ENCODE measurements at regions of chr11 and their contacts with region 1.

Region 1: GRCh38 chr11:108647701-108648527 is 17.0 kb upstream of the DDX10 start:
- DNase-seq: peak; percentile 86
- H3K4me3 Mint-ChIP-seq: no peak overlapping the region
- H3K27ac Mint-ChIP-seq: no peak overlapping the region
- H3K4me1 Mint-ChIP-seq: no peaks in the 10 kb centered on the region
- H3K27me3 Mint-ChIP-seq: no peaks in the 10 kb centered on the region

Region 2: GRCh38 chr11:107999759-108000455 is 648.0 kb before region 1 on chr11:
- CTCF ChIA-PET with region 1: no interaction called
- intact Hi-C with region 1: loop called (anchors 1 kb)
- DNase-seq: peak; percentile 42
- H3K4me3 Mint-ChIP-seq: no peak overlapping the region
- H3K27ac Mint-ChIP-seq: no peak overlapping the region
- H3K4me1 Mint-ChIP-seq: no peaks in the 10 kb centered on the region
- H3K27me3 Mint-ChIP-seq: peaks cover 3% of the 10 kb centered on the region

Region 3: DNA sequence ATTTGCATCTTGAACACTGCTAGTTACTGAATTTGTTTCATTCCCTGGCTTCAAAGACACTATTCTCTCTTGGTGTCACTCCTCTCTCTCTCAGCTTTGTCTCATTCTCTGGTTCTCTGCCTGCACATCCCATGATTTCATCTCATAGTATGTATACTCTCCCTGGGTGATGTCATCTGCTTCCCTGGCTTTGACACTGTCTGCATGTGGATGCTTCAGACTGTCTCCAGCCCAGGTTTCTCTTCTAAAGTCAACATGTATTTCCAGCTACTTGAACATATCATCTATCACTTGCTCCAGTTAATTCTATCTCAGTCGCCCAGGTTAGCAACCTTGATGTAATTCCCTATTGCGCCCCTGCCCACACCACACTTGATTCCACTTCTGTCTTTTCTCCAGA is 535.9 kb before region 1 on chr11:
- CTCF ChIA-PET with region 1: interaction called, 38 read pairs
- intact Hi-C with region 1: loop called (anchors 1 kb)
- DNase-seq: no peak
- H3K4me3 Mint-ChIP-seq: no peak overlapping the region
- H3K27ac Mint-ChIP-seq: no peak overlapping the region
- H3K4me1 Mint-ChIP-seq: no peaks in the 10 kb centered on the region
- H3K27me3 Mint-ChIP-seq: no peaks in the 10 kb centered on the region

Region 4: DNA sequence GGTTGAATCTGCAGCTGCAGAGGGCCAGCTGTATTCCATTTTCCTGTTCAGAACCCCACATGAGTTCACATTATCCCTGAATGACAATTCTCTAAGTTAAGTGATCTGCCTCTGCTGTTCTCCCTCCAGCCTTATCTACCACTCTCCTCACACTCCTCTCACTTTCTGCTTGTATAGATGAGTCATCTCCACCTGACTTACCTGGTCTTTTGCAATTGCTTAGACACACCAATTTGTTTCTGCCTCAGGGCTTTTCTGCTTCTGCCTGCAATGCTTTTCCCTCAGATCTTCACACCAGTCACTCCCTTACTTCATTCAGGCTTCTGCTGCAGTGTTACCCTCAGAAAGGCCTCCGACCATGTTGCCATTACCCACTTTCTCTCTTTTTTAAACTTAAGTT is 306.9 kb before region 1 on chr11:
- CTCF ChIA-PET with region 1: interaction called, 3 read pairs
- intact Hi-C with region 1: loop called (anchors 5 kb)
- DNase-seq: no peak
- H3K4me3 Mint-ChIP-seq: no peak overlapping the region
- H3K27ac Mint-ChIP-seq: no peak overlapping the region
- H3K4me1 Mint-ChIP-seq: peaks cover 32% of the 10 kb centered on the region
- H3K27me3 Mint-ChIP-seq: no peaks in the 10 kb centered on the region

Region 5: DNA sequence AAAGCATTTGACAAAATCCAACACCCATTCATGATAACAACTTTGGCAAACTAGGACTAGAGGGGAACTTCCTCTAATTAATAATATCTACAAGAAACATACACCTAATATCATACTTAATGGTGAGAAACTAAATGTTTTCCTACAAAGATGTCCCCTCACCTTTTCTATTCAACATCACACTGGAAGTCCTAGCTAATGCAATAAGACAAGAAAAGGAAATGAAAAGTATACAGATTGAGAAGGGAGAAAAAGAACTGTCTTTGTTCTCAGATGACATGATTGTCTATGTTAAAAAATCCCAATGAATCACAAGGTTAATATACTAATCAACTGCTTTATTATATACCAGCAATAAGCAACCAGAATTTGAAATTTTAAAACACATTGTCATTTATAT is 233.0 kb before region 1 on chr11:
- CTCF ChIA-PET with region 1: interaction called, 4 read pairs
- intact Hi-C with region 1: loop called (anchors 1 kb)
- DNase-seq: no peak
- H3K4me3 Mint-ChIP-seq: no peak overlapping the region
- H3K27ac Mint-ChIP-seq: no peak overlapping the region
- H3K4me1 Mint-ChIP-seq: no peaks in the 10 kb centered on the region
- H3K27me3 Mint-ChIP-seq: no peaks in the 10 kb centered on the region

Region 6: DNA sequence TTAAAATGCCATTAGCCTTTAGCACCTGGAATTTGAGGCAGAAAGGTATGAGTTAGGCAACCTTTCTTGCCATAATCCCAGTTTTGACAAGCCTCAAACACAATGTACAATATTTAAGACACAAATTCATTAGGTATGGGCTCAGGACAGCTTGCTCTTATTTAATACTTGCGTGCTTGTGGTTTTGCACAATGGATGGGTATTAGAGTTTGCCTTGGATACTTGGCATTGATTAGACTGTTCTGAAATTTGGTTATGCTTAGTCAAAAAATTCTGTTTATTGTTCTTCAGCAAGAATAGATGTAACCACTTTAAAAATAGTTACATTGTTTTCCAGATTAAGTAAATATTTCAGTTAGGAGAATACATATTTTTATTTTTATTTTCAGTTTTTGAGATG is 175.2 kb before region 1 on chr11:
- CTCF ChIA-PET with region 1: no interaction called
- intact Hi-C with region 1: loop called (anchors 2 kb)
- DNase-seq: no peak
- H3K4me3 Mint-ChIP-seq: no peak overlapping the region
- H3K27ac Mint-ChIP-seq: no peak overlapping the region
- H3K4me1 Mint-ChIP-seq: peaks cover 3% of the 10 kb centered on the region
- H3K27me3 Mint-ChIP-seq: no peaks in the 10 kb centered on the region

Measured in activated naive CD4-positive, alpha-beta T cell treated with anti-CD3 and anti-CD28 coated beads for 36 hours (primary cell).